ENCODE measurements at regions of chr20 and their contacts with region 1.

Region 1: DNA sequence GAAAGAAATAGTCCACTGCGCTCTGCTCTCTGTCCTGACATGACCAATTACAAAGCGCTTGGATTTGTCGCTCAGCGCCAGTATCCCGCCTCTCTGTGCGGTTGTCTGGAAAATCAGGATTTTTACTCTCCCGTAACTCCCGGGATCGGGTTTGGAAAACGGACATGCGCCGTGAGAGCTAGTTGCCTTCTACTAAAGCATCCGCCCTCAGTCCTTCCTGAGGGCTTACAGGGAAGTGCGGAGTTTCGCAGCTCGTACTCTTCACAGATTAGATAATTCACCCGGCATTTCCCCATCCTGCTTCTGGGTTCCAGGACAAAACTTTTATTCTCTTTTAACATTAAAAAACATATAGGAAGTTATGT is 427 bp upstream of the MKKS start:
- DNase-seq: peak; percentile 98
- H3K4me3 ChIP-seq: peak overlapping the region; percentile 79 to 96 (median 91)
- H3K27ac ChIP-seq: peak overlapping the region; percentile 91 to 96 (median 94)
- H3K4me1 ChIP-seq: peaks cover 7 to 41% (median 20%) of the 10 kb centered on the region in 4 donors
- H3K27me3 ChIP-seq: no peaks in the 10 kb centered on the region
- CTCF ChIP-seq: no peak
- EP300 ChIP-seq: no peak
- POLR2A ChIP-seq: peak; percentile 97

Region 2: DNA sequence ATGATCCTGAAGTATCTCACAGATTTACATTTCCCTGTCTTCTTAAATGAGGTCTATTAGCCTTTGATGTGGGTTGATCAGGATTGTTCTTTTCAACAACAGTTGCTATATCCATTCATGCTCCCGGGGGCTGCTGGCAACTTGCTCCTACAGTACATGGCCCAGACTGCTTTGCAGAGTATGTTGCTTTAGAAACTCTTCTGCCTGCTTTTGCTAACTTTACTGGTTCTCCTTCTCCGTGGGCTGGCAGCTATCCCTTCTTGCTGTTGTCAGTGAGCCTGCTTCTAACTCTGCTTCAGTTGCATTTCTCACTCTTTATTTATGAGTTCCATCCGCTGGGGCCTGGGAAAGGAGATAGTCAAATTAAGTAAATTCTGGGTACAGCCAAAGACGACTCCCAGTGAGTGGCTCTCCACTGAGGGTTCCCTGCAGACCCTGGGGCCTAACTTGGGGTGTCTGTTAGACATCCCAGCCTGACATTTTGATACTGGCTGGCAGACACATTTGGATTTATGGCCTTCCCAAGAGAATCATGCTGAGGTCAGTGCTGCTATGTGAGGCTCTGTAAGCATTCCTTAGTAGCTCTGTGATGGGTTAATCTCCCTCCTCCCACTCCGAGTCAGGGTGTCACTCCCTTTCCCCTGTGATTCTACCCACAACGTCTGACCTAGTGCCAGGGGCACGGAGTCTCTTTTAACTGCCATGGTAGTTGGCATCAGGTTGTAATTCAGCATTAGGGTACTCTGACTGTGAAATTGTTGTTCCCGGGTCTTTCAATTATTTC is 74.2 kb after region 1 on chr20:
- intact Hi-C with region 1: loop called (anchors 5 kb)
- DNase-seq: peak; percentile 82
- H3K4me3 ChIP-seq: no peak overlapping the region
- H3K27ac ChIP-seq: peak overlapping the region; percentile 53 to 87 (median 82)
- H3K4me1 ChIP-seq: peaks cover 0 to 81% (median 78%) of the 10 kb centered on the region in 4 donors
- H3K27me3 ChIP-seq: no peaks in the 10 kb centered on the region
- CTCF ChIP-seq: no peak
- EP300 ChIP-seq: no peak
- POLR2A ChIP-seq: no peak

Region 3: DNA sequence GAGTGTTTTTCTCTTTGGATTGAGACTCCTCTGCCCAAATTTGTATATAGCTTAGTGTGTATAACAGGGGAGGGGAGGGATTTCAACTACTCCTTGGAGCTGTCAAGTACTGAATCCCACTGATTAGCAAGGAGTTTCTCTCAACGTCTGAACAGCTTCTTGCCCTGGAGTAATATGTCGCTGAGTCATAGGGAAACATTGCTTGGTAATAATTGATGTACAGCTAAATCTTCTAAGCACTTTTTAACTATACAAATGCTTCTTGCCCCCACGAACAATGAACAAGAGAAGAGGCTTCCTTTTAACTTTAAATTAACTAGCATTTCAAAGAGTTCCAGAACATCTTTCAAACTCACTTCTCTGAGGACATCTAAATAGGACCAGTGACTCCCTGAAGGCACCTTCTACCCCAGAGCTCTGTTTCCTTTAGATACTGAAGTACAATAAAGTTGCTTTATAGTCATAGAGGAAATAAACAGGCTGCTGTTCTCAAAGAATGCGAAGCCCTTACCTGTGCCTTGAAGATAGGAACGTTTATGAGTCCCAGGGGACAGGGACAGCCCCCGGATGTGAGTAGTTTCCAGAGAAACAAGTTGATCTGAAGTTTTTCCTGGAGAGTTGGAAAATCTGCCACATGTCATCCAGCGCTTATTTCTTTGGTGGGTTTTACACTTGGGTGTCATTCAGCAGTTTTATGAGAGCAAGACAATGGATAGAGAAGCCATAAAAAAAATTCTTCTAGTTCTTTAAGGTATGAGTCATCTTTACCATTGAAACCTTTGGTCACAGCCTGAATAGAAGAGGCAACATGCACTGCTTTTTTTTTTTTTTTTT is 1020.7 kb after region 1 on chr20:
- intact Hi-C with region 1: loop called (anchors 5 kb)
- DNase-seq: no peak
- H3K4me3 ChIP-seq: no peak overlapping the region
- H3K27ac ChIP-seq: peak overlapping the region in 1 of 4 donors; percentile 5
- H3K4me1 ChIP-seq: peaks cover 0 to 60% (median 39%) of the 10 kb centered on the region in 4 donors
- H3K27me3 ChIP-seq: no peaks in the 10 kb centered on the region
- CTCF ChIP-seq: no peak
- EP300 ChIP-seq: no peak
- POLR2A ChIP-seq: no peak